ENCODE measurements at regions of chr11 and their contacts with region 1.

Region 1: DNA sequence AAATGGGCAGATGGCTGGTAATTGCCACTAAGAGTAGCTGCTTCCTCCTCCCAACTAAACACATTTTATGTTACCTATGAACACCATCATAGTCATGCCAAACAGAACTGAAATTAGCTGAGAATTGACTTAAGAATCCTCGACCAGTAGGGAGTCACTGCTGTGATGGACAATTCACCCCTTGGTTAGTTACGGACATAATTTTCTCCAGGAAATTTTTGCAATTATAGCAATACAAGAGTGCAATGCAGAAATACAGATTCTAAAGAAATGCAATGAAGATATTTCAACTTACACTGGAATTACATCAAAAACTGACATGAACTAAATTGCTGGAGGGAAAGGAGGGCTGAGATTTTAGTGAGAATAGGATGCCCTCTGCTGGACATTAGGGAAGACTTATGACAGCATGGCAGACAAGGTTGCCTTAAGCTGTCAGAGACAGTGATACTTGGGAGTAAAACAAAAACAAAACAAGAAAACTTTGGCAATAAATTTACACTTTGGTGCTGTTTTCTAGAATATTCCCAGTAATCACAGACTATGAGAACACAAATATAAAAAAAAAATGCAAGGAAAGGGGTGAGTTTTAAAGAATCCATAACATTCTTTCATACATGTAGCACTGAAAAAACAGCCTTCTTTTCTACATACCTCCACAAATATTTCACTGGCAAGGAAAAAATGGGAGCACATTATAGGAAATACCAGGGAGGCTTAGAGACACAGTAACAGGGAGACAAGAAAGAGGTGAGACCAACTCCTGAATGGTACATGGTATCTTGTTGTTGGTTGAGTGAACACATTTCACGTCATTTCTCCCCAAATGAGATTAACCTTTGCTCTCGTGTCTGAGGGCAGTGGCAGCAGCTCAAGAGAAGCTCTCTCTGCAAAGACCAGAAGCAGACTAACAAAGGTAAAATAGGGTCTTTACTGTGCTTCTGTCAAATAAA is 11.2 kb upstream of the PPP2R1B start:
- DNase-seq: no peak
- H3K4me3 Mint-ChIP-seq: no peak overlapping the region
- H3K27ac Mint-ChIP-seq: no peak overlapping the region
- H3K4me1 Mint-ChIP-seq: peaks cover 3% of the 10 kb centered on the region
- H3K27me3 Mint-ChIP-seq: no peaks in the 10 kb centered on the region

Region 2: DNA sequence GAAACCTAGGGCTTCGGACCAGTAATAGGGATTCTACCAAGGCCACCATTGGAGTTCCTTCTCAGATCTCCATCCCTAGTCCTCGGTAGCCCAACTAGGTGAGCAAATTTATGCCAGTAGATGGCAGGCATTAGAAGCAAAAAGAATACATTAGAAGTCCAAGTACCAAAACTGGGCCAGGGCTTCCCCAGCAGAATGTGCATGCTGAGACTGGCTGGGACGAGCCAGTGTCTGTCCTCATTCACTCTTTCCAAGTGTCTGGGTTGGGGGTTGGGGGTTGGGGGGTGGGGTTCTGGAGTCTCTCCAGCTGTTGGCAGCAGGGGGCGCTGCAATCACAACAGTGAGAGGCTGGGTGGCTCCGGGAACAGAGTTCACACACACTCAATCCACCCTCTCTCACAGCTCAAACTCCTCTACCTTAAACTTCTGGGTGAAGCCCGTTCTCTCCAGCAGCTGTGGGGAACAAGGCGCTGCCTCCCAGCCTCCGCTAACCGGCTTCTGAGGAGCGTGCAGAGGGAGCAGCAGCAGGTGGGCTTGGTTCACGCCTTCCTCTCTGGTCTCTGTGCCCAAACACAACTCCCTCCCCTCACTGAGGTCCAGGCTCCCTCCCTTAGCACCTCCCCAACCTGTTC is 322.7 kb before region 1 on chr11:
- intact Hi-C with region 1: loop called (anchors 5 kb)
- DNase-seq: no peak
- H3K4me3 Mint-ChIP-seq: no peak overlapping the region
- H3K27ac Mint-ChIP-seq: no peak overlapping the region
- H3K4me1 Mint-ChIP-seq: no peaks in the 10 kb centered on the region
- H3K27me3 Mint-ChIP-seq: peaks cover 9% of the 10 kb centered on the region

Region 3: GRCh38 chr11:111565114-111565720 is 212.2 kb before region 1 on chr11:
- intact Hi-C with region 1: loop called (anchors 1 kb)
- DNase-seq: peak; percentile 29
- H3K4me3 Mint-ChIP-seq: no peak overlapping the region
- H3K27ac Mint-ChIP-seq: no peak overlapping the region
- H3K4me1 Mint-ChIP-seq: no peaks in the 10 kb centered on the region
- H3K27me3 Mint-ChIP-seq: peaks cover 3% of the 10 kb centered on the region

Region 4: DNA sequence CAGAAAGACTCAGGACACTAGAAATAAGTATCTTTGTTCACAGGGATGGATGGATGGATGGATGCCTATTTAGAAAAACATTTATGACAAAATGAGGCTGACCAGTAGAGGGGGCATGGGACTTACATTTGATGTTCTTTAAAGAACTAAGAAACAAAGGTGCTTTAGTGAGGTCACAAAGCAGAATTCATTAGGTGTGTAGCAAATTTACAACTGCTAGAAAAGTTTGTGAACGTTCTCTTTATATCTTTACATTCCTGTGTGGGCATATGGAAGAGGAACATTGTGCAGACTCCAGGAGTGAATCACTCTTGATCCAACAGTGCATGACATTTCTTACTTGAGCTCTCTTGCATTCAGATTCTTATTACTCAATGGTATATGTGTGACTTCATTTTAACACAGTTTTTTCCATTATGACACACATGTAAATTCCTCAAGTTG is 191.0 kb before region 1 on chr11:
- intact Hi-C with region 1: loop called (anchors 1 kb)
- DNase-seq: no peak
- H3K4me3 Mint-ChIP-seq: no peak overlapping the region
- H3K27ac Mint-ChIP-seq: no peak overlapping the region
- H3K4me1 Mint-ChIP-seq: peaks cover 2% of the 10 kb centered on the region
- H3K27me3 Mint-ChIP-seq: peaks cover 5% of the 10 kb centered on the region

Region 5: GRCh38 chr11:111601979-111602864 is 175.1 kb before region 1 on chr11 and contains the start of gene SIK2:
- intact Hi-C with region 1: loop called (anchors 1 kb)
- DNase-seq: peak; percentile 86
- H3K4me3 Mint-ChIP-seq: peak within 1 kb of the TSS; percentile 96
- H3K27ac Mint-ChIP-seq: peak within 1 kb of the TSS; percentile 88
- H3K4me1 Mint-ChIP-seq: peaks cover 31% of the 10 kb centered on the region
- H3K27me3 Mint-ChIP-seq: peaks cover 6% of the 10 kb centered on the region
- total RNA-seq, gene SIK2: 9.9 TPM in 2 replicates

Region 6: GRCh38 chr11:111694851-111695250 is 82.5 kb before region 1 on chr11:
- intact Hi-C with region 1: no loop called
- DNase-seq: no peak
- H3K4me3 Mint-ChIP-seq: no peak overlapping the region
- H3K27ac Mint-ChIP-seq: no peak overlapping the region
- H3K4me1 Mint-ChIP-seq: peaks cover 13% of the 10 kb centered on the region
- H3K27me3 Mint-ChIP-seq: no peaks in the 10 kb centered on the region

Region 7: DNA sequence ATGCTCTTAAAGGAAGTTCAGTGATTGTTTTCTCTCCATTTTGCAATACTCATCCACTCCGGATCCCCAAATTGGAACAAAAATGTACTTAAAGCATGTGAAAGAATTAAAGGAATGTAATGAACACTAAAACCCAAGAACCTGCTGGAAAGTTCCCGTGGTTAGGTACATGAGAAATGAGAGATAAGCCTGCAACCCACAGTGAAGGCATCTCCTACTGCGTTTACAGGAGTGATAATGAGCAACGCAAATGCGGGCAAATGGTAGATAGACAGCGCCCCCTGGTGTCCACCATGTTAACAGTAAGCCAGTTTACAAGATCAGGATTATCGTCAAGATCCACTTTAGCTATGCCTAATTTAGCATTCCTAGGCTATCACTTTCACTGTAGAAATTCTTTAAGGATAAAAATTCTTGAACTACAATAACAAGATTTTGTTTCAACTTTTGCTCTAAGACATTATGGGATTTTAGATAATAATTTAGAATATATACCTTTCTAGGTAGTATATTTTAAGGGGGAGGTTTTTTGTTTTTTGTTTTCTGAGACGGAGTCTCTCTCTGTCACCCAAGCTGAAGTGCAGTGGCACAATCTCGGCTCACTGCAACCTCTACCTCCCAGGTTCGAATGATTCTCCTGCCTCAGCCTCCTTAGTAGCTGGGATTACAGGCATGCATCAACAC is 64.1 kb after region 1 on chr11:
- intact Hi-C with region 1: loop called (anchors 1 kb)
- DNase-seq: peak; percentile 69
- H3K4me3 Mint-ChIP-seq: no peak overlapping the region
- H3K27ac Mint-ChIP-seq: no peak overlapping the region
- H3K4me1 Mint-ChIP-seq: peaks cover 10% of the 10 kb centered on the region
- H3K27me3 Mint-ChIP-seq: no peaks in the 10 kb centered on the region